Activated B cell treated with CpG ODN at 0.5 μM for 24 hours (primary cell): ENCODE measurements at regions of chr20 and their contacts with region 1.

Region 1: DNA sequence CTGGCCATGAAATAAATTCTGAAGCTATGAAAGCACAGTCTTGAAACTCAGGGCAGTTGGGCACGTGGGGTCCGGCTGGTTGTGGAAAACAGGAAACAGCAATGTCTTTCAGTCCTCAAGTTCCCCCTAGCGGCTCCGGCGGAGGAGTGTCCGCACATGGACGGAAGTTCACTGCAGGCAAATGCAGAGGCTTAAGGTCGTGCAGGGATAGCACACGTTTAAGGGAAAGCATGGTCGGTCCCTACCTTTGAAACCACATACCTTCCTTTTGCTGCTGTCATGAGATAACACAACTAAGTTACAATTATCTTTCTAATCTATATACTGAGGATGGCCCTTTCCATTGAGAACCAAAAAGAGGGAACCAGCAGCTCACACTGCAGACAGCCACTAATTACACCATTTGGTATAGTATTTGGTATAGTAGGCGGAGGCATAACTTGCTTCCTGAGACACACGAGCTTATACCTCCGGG is 52.6 kb upstream of the NFATC2 start:
- DNase-seq: peak; percentile 57
- ATAC-seq: peak; percentile 93
- H3K4me3 Mint-ChIP-seq: peak overlapping the region; percentile 55
- H3K27ac Mint-ChIP-seq: no peak overlapping the region
- H3K4me1 Mint-ChIP-seq: peaks cover 21% of the 10 kb centered on the region
- H3K27me3 Mint-ChIP-seq: peaks cover 38% of the 10 kb centered on the region
- CTCF ChIP-seq: peak; percentile 91

Region 2: DNA sequence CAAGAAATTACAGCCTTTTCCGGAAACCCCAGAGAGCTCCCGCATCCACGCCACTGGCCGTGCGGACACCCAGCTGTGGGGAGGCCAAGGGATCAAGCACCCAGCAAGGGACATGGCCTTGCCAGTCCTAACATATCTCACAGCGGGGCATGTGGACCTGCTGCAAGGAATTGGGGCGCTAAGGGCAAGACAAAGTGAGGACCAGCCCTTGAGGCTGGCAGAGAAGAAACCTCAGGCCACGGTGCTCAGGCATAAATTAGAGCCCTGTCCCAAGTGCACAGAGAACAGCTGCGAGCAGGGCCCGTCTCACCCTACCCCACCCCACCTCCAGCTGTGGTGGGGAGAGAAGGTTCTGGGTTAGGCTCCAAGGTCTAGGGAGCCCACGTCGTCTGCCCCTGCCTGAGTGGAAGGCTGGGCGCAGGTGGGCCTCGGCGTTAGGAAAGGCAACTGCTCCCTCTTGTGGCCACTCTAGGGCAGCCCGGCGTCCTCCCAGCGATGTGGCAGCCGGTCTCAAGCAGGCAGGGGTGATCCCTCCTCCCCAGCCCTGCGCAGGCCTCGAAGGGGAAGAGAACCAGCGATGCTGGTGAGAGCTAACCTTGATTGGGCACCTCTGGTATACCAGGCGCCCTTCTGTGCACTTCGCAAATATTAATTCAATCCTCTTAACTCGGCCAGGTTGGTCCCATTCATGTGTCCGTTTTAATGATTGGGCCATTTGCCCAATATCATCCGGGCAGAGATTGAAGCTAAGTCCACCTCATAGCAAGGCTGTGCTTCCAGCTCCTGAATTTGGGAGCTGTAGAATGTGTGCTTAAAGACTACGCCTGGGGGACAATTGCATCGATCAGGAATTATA is 288.4 kb before region 1 on chr20:
- CTCF ChIA-PET with region 1: interaction called, 5 read pairs
- POLR2A ChIA-PET with region 1: no interaction called
- intact Hi-C with region 1: loop called (anchors 2 kb)
- DNase-seq: peak; percentile 65
- ATAC-seq: peak; percentile 98
- H3K4me3 Mint-ChIP-seq: no peak overlapping the region
- H3K27ac Mint-ChIP-seq: no peak overlapping the region
- H3K4me1 Mint-ChIP-seq: no peaks in the 10 kb centered on the region
- H3K27me3 Mint-ChIP-seq: peaks cover 25% of the 10 kb centered on the region
- CTCF ChIP-seq: no peak

Region 3: DNA sequence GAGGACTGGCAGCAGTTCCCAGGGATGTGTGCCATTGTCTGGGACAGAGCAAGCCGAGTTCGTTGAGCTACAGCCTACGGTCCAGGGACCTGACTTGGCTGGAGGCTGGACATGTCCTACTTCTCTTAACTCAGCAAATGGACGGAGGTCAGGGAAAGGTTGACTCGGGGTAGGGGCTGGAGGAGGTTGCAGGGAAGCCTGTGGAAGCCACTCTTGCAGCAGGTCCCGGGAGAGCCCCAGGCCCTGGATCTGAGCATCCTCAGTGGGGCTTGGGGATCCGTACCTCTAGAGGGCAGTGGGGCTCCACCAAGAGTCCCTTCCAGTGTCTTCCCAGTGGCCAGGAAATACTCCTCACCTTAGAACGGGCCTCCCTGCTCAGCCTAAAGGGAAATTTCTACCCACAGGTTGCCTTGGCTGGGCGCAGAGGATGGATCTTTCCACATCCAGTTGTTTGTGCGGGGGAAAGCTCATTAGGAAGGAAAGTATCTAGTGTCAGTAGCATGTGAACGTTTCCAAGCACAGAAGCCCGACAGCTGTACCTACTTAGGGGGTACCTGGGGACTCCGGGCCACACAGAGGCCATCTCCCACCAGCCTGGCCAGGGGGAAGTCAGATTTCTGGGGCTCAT is 222.8 kb before region 1 on chr20:
- CTCF ChIA-PET with region 1: interaction called, 83 read pairs
- POLR2A ChIA-PET with region 1: no interaction called
- intact Hi-C with region 1: loop called (anchors 1 kb)
- DNase-seq: peak; percentile 42
- ATAC-seq: peak; percentile 62
- H3K4me3 Mint-ChIP-seq: no peak overlapping the region
- H3K27ac Mint-ChIP-seq: no peak overlapping the region
- H3K4me1 Mint-ChIP-seq: peaks cover 4% of the 10 kb centered on the region
- H3K27me3 Mint-ChIP-seq: peaks cover 5% of the 10 kb centered on the region
- CTCF ChIP-seq: peak; percentile 38

Region 4: DNA sequence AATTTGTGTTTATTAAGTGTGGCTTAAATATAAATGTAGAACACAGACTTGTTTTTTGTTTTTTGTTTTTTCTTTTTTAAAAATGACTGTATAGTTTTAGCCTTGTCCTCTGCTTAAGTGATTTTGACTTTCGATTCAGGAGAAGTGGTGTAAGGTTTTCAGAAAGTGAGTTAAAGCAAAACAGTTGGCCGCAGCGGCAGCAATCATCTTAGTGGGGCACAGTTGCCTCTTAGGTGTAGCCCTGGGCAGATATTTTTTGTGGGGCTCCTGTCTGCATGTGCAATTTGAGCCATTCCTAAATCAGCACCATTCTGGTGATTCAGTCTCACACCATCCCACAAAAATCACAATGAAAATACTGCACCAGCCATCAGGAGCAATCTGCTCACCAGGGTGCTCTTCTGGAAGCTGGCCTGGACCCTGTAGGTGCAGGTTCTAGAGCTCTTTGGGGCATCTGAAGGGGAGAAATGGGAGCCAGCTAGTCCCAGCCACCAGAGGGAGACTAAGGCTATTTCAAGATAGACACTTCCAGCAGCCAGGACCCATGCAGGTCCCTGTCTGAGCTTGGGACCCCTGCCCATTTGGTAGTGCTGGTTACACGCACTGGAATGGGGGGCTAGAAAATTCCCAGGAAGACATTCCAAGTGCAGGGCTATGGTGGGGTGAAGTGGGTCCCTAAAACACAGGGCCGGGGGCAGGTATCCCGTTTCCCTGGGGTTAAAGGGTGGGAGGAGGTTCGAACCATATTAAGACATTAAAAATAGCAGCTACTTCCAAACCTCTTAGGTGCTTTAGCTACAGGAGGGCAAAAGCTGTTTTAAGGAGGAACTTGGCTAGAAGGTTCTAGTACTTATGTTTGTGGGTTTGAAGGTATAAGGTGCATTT is 209.2 kb before region 1 on chr20:
- CTCF ChIA-PET with region 1: interaction called, 87 read pairs
- POLR2A ChIA-PET with region 1: interaction called, 9 read pairs
- intact Hi-C with region 1: loop called (anchors 1 kb)
- DNase-seq: no peak
- ATAC-seq: peak; percentile 65
- H3K4me3 Mint-ChIP-seq: no peak overlapping the region
- H3K27ac Mint-ChIP-seq: peak overlapping the region; percentile 62
- H3K4me1 Mint-ChIP-seq: peaks cover 42% of the 10 kb centered on the region
- H3K27me3 Mint-ChIP-seq: no peaks in the 10 kb centered on the region
- CTCF ChIP-seq: no peak

Region 5: GRCh38 chr20:51440589-51440988 is 154.5 kb before region 1 on chr20:
- CTCF ChIA-PET with region 1: no interaction called
- POLR2A ChIA-PET with region 1: no interaction called
- intact Hi-C with region 1: no loop called
- DNase-seq: no peak
- ATAC-seq: peak; percentile 54
- H3K4me3 Mint-ChIP-seq: peak overlapping the region; percentile 41
- H3K27ac Mint-ChIP-seq: peak overlapping the region; percentile 46
- H3K4me1 Mint-ChIP-seq: peaks cover 39% of the 10 kb centered on the region
- H3K27me3 Mint-ChIP-seq: no peaks in the 10 kb centered on the region
- CTCF ChIP-seq: no peak

Region 6: DNA sequence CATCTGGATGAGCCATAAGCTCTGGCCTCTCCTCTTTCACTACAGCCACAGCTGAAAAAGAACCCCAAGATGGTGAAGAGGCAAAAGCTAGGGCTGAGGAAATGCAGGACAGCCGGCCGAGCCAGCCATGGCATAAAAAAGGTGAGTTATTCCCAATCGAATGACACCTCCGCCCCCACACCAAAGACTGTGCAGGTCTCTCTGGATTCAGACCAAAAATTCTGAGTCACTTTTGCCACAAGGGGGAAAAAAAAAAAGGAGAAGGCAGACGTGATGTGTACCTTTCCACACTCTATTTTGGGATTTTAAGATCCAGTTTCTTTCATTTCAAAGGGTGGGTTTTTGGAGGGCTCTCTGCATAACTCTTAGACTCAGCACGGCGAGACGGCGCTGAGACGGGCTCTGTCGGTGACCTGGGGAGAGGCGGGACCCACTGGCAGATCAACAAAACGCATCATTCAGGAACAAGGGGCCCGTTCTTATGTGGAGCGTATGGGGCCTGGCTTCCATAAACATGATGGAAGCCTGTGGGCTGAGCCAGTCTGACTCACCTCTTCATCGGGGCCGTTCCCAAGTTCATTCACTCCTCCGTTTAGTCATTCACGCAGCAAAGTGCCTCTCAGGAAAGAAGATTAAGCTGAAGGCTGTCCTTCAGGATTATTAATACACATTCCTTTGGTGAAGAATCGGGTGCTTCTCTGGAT is 107.4 kb before region 1 on chr20:
- CTCF ChIA-PET with region 1: no interaction called
- POLR2A ChIA-PET with region 1: no interaction called
- intact Hi-C with region 1: no loop called
- DNase-seq: no peak
- ATAC-seq: no peak
- H3K4me3 Mint-ChIP-seq: no peak overlapping the region
- H3K27ac Mint-ChIP-seq: no peak overlapping the region
- H3K4me1 Mint-ChIP-seq: peaks cover 25% of the 10 kb centered on the region
- H3K27me3 Mint-ChIP-seq: no peaks in the 10 kb centered on the region
- CTCF ChIP-seq: no peak

Region 7: GRCh38 chr20:51525241-51526129 is 69.6 kb before region 1 on chr20:
- CTCF ChIA-PET with region 1: interaction called, 3 read pairs
- POLR2A ChIA-PET with region 1: interaction called, 6 read pairs
- intact Hi-C with region 1: loop called (anchors 5 kb)
- DNase-seq: peak; percentile 31
- ATAC-seq: peak; percentile 53
- H3K4me3 Mint-ChIP-seq: peak overlapping the region; percentile 58
- H3K27ac Mint-ChIP-seq: peak overlapping the region; percentile 82
- H3K4me1 Mint-ChIP-seq: peaks cover 77% of the 10 kb centered on the region
- H3K27me3 Mint-ChIP-seq: no peaks in the 10 kb centered on the region
- CTCF ChIP-seq: no peak

Region 8: GRCh38 chr20:51535674-51536073 is 59.4 kb before region 1 on chr20:
- CTCF ChIA-PET with region 1: no interaction called
- POLR2A ChIA-PET with region 1: no interaction called
- intact Hi-C with region 1: no loop called
- DNase-seq: no peak
- ATAC-seq: no peak
- H3K4me3 Mint-ChIP-seq: no peak overlapping the region
- H3K27ac Mint-ChIP-seq: peak overlapping the region; percentile 73
- H3K4me1 Mint-ChIP-seq: peaks cover 88% of the 10 kb centered on the region
- H3K27me3 Mint-ChIP-seq: no peaks in the 10 kb centered on the region
- CTCF ChIP-seq: no peak

Region 9: GRCh38 chr20:51579137-51579536 is 16.0 kb before region 1 on chr20:
- CTCF ChIA-PET with region 1: interaction called, 11 read pairs
- POLR2A ChIA-PET with region 1: interaction called, 9 read pairs
- intact Hi-C with region 1: no loop called
- DNase-seq: no peak
- ATAC-seq: no peak
- H3K4me3 Mint-ChIP-seq: no peak overlapping the region
- H3K27ac Mint-ChIP-seq: no peak overlapping the region
- H3K4me1 Mint-ChIP-seq: no peaks in the 10 kb centered on the region
- H3K27me3 Mint-ChIP-seq: peaks cover 24% of the 10 kb centered on the region
- CTCF ChIP-seq: no peak

Region 10: GRCh38 chr20:51624157-51624731 is 29.1 kb after region 1 on chr20:
- CTCF ChIA-PET with region 1: interaction called, 8 read pairs
- POLR2A ChIA-PET with region 1: interaction called, 4 read pairs
- intact Hi-C with region 1: loop called (anchors 1 kb)
- DNase-seq: peak; percentile 55
- ATAC-seq: peak; percentile 64
- H3K4me3 Mint-ChIP-seq: no peak overlapping the region
- H3K27ac Mint-ChIP-seq: no peak overlapping the region
- H3K4me1 Mint-ChIP-seq: peaks cover 2% of the 10 kb centered on the region
- H3K27me3 Mint-ChIP-seq: peaks cover 18% of the 10 kb centered on the region
- CTCF ChIP-seq: no peak